GM18951 (cell line): ENCODE measurements at regions of chr14 and their contacts with region 1.

Region 1: GRCh38 chr14:22319526-22320361 is 269.3 kb downstream of the DAD1 start:
- POLR2A ChIP-seq: no peak

Region 2: DNA sequence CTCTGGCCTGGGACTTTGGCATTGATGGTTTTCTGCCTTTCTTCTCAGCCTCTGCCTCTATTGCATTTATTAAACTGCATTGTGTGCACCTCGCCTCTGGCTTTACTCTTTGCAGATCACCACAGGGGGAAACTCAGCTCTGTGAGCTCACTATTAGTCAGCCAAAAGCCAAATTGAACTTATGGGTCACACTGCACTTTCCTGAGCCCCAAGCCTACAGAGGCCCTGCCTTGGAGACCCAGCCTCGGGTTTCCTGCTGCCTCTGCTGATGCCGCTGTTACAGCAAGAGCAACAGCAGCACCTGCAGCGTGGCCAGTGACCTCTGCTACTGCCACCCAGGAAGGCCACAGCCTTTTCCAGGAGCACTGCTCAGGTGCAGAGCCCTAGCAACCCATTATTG is 146.7 kb after region 1 on chr14:
- in situ Hi-C with region 1: loop called (anchors 5 kb)
- POLR2A ChIP-seq: no peak

Region 3: DNA sequence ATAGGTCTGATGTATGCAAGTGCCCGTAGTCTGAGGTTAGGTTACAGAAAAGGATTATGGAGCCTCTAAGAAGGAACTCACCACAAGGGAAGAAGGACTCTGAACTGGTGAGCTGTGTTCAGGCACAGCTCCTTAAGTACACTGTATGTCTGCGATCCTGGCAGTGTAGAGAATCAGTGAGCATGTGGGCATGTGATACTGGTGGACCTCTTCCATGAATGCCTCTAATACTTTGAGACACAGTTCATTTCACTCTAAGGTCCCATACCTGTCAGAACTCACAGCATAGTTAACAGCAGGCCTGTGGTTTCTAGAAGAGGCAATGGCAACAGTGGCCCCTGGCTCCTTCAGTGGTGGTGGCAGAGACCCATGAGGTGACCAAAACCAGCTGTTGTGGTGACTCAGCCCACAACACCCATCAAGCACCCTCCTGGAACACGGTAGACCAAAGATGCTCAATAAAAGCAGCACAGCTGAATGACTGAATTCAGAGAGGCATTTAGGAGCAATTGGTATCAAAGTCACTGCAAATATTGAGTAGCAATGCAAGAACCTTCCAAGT is 331.3 kb after region 1 on chr14:
- in situ Hi-C with region 1: no loop called
- POLR2A ChIP-seq: peak; percentile 60